Heart right ventricle (tissue), 16 donors: ENCODE measurements at regions of chr2 and their contacts with region 1.

Region 1: GRCh38 chr2:219388127-219388844 is 574 bp upstream of the DNPEP start:
- DNase-seq: peak; percentile 99 to 100
- ATAC-seq: peak; percentile 87 to 91 (median 88)
- H3K4me3 ChIP-seq: peak overlapping the region in 9 of 10 donors; percentile 1 to 99 (median 90)
- H3K27ac ChIP-seq: peak overlapping the region; percentile 65 to 97 (median 96)
- H3K4me1 ChIP-seq: peaks cover 5 to 29% (median 13%) of the 10 kb centered on the region in 9 donors
- H3K27me3 ChIP-seq: no peaks in the 10 kb centered on the region
- CTCF ChIP-seq: peak; percentile 46 to 83 (median 72)

Region 2: GRCh38 chr2:219099329-219099728 is 289.0 kb before region 1 on chr2:
- intact Hi-C with region 1: no loop called
- DNase-seq: no peak
- ATAC-seq: no peak
- H3K4me3 ChIP-seq: no peak overlapping the region
- H3K27ac ChIP-seq: no peak overlapping the region
- H3K4me1 ChIP-seq: peaks cover 0 to 8% (median 0%) of the 10 kb centered on the region in 9 donors
- H3K27me3 ChIP-seq: no peaks in the 10 kb centered on the region
- CTCF ChIP-seq: no peak

Region 3: DNA sequence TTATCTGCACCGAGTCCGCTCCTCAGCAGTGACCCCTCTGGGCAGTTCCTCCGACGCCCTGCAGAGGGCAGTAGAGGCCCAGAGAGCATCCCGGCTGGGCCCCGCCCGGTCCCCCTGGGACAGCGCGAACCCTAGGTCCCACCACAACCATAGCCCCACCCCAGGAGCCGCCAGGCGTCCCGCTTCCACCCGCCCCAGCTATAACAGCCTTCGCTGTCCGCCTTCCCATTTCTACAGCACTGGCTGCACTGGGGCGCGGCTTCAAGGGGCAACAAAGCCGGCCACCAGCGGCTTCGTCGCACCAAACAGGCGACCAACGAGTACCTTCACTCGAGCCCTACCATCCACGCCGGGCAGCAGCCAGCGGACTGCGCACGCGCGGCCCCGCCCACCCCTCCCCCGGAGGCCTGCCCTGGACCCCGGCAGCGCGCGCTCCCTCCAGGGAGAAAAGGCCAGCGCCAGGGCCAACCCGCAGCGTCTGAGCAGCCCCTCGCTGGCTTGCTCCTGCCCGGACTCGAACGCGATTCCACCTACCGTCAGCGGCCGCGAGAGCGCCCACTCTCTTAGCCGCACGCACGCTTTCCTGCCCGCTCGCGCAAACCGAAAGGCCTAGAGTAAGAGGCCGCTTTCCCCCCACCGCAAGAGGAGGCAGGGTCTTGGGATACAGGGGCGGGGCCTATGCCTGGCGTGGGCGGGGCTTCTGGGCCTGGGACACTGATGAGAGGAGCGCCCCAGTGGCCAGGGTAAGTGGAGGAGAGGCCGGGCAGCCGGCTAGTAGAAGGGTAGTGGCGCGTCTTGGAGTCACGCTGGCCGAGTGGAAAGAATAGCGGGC is 227.9 kb before region 1 on chr2 and contains the start of gene NHEJ1:
- intact Hi-C with region 1: loop called in 1 of 10 experiments (anchors 10 kb)
- DNase-seq: peak; percentile 97 to 98
- ATAC-seq: peak; percentile 96 to 98 (median 97)
- H3K4me3 ChIP-seq: peak within 1 kb of the TSS; percentile 40 to 74 (median 62)
- H3K27ac ChIP-seq: peak within 1 kb of the TSS; percentile 80 to 94 (median 92)
- H3K4me1 ChIP-seq: peaks cover 0 to 19% (median 11%) of the 10 kb centered on the region in 9 donors
- H3K27me3 ChIP-seq: no peaks in the 10 kb centered on the region
- CTCF ChIP-seq: peak; percentile 99 to 100 (median 99)
- total RNA-seq, gene NHEJ1: 4.7 to 12.0 (median 7.1) TPM

Region 4: GRCh38 chr2:219498280-219499057 is 110.2 kb after region 1 on chr2 and contains the start of gene GMPPA:
- intact Hi-C with region 1: loop called in 1 of 10 experiments (anchors 5 kb)
- DNase-seq: peak; percentile 94 to 97
- ATAC-seq: peak; percentile 87 to 94 (median 90)
- H3K4me3 ChIP-seq: peak within 1 kb of the TSS; percentile 52 to 88 (median 75)
- H3K27ac ChIP-seq: peak within 1 kb of the TSS; percentile 91 to 100 (median 96)
- H3K4me1 ChIP-seq: peaks cover 19 to 50% (median 37%) of the 10 kb centered on the region in 9 donors
- H3K27me3 ChIP-seq: peaks cover 0 to 43% (median 18%) of the 10 kb centered on the region in 7 donors
- CTCF ChIP-seq: peak in 3 of 9 donors; percentile 15 to 29 (median 25)
- total RNA-seq, gene GMPPA: 15.8 to 29.4 (median 21.0) TPM

Region 5: GRCh38 chr2:219521066-219521880 is 133.0 kb after region 1 on chr2:
- intact Hi-C with region 1: no loop called
- DNase-seq: peak in 1 of 2 donors; percentile 45
- ATAC-seq: peak; percentile 58 to 79 (median 66)
- H3K4me3 ChIP-seq: no peak overlapping the region
- H3K27ac ChIP-seq: peak overlapping the region in 7 of 10 donors; percentile 35 to 81 (median 62)
- H3K4me1 ChIP-seq: peaks cover 14 to 52% (median 25%) of the 10 kb centered on the region in 9 donors
- H3K27me3 ChIP-seq: peaks cover 5 to 92% (median 41%) of the 10 kb centered on the region in 7 donors
- CTCF ChIP-seq: peak; percentile 18 to 69 (median 54)

Region 6: GRCh38 chr2:219597552-219598307 is 209.4 kb after region 1 on chr2 and contains the start of gene STK11IP:
- intact Hi-C with region 1: loop called in 1 of 10 experiments (anchors 1 kb)
- DNase-seq: peak; percentile 94 to 98
- ATAC-seq: peak; percentile 96 to 99 (median 98)
- H3K4me3 ChIP-seq: peak within 1 kb of the TSS; percentile 46 to 80 (median 70)
- H3K27ac ChIP-seq: peak within 1 kb of the TSS; percentile 87 to 97 (median 94)
- H3K4me1 ChIP-seq: peaks cover 0 to 29% (median 10%) of the 10 kb centered on the region in 9 donors
- H3K27me3 ChIP-seq: no peaks in the 10 kb centered on the region
- CTCF ChIP-seq: no peak
- total RNA-seq, gene STK11IP: 7.2 to 18.2 (median 12.9) TPM